ENCODE measurements at regions of chr12 and their contacts with region 1.

Region 1: GRCh38 chr12:52278541-52279421 is 4.3 kb downstream of the KRT86 start:
- DNase-seq: no peak
- H3K4me3 ChIP-seq: peak overlapping the region; percentile 13; the same call in 1 of the 2 replicates
- CTCF ChIP-seq: peak; percentile 100

Region 2: DNA sequence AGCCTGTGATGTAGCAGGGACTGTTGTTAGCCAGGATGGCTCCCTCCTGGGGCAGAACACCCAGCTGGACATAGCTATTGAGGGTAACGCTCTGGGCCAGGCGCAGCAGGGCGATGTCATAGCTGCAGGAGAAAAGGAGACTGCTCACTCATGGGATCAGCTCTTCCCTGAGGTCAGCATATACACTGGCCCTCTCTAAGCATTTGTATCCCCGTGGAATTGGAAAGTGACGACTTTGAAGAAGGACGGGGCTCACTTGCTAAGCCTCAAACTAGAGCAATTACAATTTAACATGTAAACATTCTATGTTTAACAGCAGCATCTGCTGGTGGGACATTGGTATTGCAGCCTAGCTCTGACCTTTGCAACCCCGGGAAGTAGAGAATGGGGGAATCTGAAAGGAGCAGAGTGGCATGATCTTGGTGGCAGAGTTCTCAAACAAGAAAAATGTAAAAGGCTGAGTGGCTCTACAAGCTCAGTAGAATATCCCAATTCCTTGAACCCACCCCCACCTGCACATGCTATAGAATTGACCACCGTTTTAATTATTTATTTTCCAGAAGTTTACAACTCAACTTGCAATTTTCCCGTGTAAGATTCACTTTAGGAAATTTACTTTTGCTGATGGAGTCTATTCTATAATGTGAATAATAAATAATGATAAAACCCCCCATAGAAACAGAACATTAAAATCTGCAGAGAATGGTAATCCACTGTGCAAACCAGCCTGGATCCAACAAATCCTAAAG is 937.3 kb before region 1 on chr12:
- CTCF ChIA-PET with region 1: no interaction called
- POLR2A ChIA-PET with region 1: no interaction called
- DNase-seq: no peak
- H3K4me3 ChIP-seq: peak overlapping the region; percentile 41
- CTCF ChIP-seq: peak; percentile 89

Region 3: DNA sequence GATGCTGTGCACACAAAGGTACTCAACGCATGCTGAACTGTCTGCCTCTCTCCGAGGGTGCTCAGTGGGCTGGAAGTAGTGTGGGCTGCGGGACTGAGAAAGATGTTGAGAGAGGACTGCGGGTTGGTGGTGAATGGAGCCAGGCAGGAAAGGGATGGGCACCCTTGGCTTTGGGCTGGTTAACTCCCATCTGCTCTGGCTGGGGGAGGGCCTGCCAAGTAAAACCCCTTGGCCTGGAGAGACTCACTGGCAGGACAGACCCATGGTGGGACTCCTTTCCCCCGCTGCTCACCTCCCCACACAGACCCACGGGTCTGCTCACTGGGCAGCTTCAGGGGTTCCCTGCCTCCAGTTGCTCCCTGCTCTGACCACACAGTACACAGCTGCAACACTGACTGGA is 141.1 kb before region 1 on chr12:
- CTCF ChIA-PET with region 1: no interaction called
- POLR2A ChIA-PET with region 1: no interaction called
- DNase-seq: no peak
- H3K4me3 ChIP-seq: no peak overlapping the region
- CTCF ChIP-seq: no peak

Region 4: DNA sequence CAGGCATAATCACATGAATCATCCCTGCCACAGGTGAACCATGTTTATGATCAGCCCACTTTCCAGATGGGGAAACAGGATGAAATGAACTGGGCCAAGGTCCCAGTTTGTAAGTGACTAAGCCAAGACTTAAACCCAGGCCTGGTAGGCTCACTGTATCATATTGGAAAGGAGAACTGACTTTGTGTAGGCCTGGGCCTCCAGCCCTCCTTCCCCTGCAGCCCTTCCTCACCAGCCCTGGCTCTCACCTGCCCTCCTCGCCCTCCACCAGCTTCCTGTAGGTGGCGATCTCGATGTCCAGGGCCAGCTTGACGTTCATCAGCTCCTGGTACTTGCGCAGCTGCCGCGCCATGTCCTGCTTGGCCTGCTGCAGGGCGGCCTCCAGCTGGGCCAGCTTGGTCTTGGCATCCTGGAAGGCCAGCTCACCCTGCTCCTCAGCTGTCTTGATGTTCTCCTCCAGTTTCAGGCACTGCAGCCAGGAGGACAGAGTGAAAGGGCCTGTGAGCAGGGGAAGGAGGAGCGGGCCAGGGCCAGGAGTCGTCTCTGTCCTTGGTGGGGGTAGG is 106.8 kb before region 1 on chr12:
- CTCF ChIA-PET with region 1: interaction called, 13 read pairs
- POLR2A ChIA-PET with region 1: no interaction called
- DNase-seq: no peak
- H3K4me3 ChIP-seq: no peak overlapping the region
- CTCF ChIP-seq: peak; percentile 55

Region 5: GRCh38 chr12:52221912-52222457 is 56.8 kb before region 1 on chr12:
- CTCF ChIA-PET with region 1: interaction called, 17 read pairs
- POLR2A ChIA-PET with region 1: interaction called, 3 read pairs
- DNase-seq: no peak
- H3K4me3 ChIP-seq: no peak overlapping the region
- CTCF ChIP-seq: peak; percentile 46

Region 6: DNA sequence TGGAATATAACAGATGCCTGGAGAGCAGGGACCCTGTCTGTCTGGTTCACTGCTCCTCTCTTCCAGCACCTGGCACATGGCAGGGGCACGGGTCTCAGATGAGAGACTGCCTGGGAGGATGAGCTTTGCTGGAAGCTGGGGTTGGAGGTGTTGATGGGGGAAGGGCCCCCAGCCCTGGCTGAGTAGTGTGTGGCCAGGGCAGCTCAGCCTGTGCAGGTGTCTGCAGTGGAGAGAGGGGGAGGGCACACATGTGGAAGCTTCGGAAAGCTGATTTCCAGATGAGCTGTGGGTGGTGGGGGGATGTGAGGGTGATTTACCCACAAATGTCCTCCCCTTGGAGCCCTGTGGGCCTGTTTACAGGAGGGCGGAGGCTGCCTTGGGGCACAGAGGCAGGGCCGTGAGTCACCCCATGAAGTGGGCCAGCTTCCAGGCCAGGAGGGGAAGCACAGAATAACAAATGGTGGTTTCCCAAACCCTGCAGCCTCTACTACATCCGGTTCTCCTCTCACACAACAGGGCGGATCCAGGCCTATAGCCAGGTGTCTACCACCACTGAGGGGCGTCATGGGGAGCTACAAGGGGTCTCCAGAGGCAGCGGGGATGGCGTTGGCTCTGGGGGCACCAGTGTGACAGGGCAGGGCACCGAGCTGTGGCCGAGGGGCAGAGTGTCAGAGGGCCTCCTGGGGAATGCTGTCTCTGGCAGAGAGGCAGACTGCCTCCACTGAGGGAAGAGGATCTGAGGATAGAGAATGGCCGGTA is 34.7 kb before region 1 on chr12:
- CTCF ChIA-PET with region 1: interaction called, 128 read pairs
- POLR2A ChIA-PET with region 1: interaction called, 5 read pairs
- DNase-seq: peak; percentile 54
- H3K4me3 ChIP-seq: no peak overlapping the region
- CTCF ChIP-seq: no peak

Region 7: DNA sequence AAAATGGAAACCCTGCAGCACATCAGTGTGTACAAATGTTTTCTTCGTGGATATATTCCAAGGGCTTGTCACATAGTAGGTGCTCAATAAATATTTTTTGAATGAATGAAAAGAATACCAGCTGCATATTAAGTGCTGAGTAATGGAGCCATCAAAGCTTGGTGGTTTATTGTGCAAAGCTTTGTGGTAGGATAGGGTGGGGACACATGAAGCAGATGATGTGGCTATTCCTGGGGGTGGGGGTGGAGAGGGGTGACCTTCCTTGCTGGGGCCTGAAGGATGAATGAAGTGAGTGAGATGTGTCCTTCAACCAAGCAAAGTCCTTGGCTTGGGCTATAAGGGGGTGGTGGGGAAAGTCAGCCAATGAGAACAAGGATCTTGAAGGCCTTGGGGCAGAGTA is 16.9 kb after region 1 on chr12:
- CTCF ChIA-PET with region 1: interaction called, 30 read pairs
- POLR2A ChIA-PET with region 1: no interaction called
- DNase-seq: no peak
- H3K4me3 ChIP-seq: no peak overlapping the region
- CTCF ChIP-seq: no peak

Region 8: GRCh38 chr12:52404956-52405355 is 126.2 kb after region 1 on chr12:
- CTCF ChIA-PET with region 1: no interaction called
- POLR2A ChIA-PET with region 1: no interaction called
- DNase-seq: no peak
- H3K4me3 ChIP-seq: no peak overlapping the region
- CTCF ChIP-seq: no peak

Region 9: GRCh38 chr12:52667511-52667910 is 388.7 kb after region 1 on chr12:
- CTCF ChIA-PET with region 1: no interaction called
- POLR2A ChIA-PET with region 1: no interaction called
- DNase-seq: no peak
- H3K4me3 ChIP-seq: no peak overlapping the region
- CTCF ChIP-seq: peak; percentile 10